ENCODE measurements at regions of chr21 and their contacts with region 1.

Region 1: GRCh38 chr21:43866260-43866629 is 1.2 kb downstream of the AGPAT3 start:
- DNase-seq: no peak
- H3K4me3 Mint-ChIP-seq: peak overlapping the region; percentile 90
- H3K27ac Mint-ChIP-seq: peak overlapping the region; percentile 94
- H3K4me1 Mint-ChIP-seq: peaks cover 42% of the 10 kb centered on the region
- H3K27me3 Mint-ChIP-seq: no peaks in the 10 kb centered on the region

Region 2: GRCh38 chr21:43619856-43620255 is 246.4 kb before region 1 on chr21:
- intact Hi-C with region 1: no loop called
- DNase-seq: no peak
- H3K4me3 Mint-ChIP-seq: no peak overlapping the region
- H3K27ac Mint-ChIP-seq: no peak overlapping the region
- H3K4me1 Mint-ChIP-seq: peaks cover 2% of the 10 kb centered on the region
- H3K27me3 Mint-ChIP-seq: peaks cover 8% of the 10 kb centered on the region

Region 3: DNA sequence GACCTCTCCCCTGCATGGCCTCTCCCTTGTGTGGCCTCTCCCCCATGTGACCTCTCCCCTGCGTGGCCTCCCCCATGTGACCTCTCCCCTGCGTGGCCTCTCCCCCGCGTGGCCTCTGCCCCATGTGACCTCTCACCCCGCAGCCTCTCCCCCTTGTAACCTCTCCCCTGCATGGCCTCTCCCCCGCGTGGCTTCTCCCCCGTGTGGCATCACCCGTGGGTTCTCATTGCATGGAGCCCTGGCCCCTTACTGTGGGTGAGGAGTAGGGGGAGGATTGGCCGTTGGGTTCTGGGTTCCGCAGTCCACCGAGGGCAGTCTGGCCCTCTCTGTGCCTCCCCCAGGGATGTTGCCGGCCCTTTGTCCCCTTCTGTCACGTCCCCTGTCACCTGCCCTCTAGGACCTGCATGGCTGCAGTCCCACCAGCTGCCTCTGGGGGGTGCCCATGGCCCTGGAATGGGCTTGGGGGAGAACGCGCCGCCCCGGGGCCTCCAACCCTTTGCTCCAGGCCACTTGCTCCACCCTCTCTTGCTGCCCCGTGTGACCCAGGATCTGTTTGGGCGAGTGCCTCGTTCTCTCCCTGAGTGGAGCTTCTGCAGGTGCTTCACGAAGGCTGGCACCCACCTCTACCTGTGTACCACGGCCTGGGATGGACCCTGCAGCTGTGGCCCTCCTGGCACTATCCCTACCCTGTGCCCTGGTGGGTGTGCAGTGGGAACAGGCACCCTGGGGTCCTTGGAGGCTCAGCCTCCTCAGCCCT is 55.6 kb before region 1 on chr21:
- intact Hi-C with region 1: loop called (anchors 5 kb)
- DNase-seq: peak; percentile 85
- H3K4me3 Mint-ChIP-seq: no peak overlapping the region
- H3K27ac Mint-ChIP-seq: peak overlapping the region; percentile 4
- H3K4me1 Mint-ChIP-seq: peaks cover 11% of the 10 kb centered on the region
- H3K27me3 Mint-ChIP-seq: no peaks in the 10 kb centered on the region

Region 4: GRCh38 chr21:43842742-43843141 is 23.5 kb before region 1 on chr21:
- intact Hi-C with region 1: loop called (anchors 2 kb)
- DNase-seq: no peak
- H3K4me3 Mint-ChIP-seq: peak overlapping the region; percentile 20
- H3K27ac Mint-ChIP-seq: peak overlapping the region; percentile 29
- H3K4me1 Mint-ChIP-seq: peaks cover 16% of the 10 kb centered on the region
- H3K27me3 Mint-ChIP-seq: no peaks in the 10 kb centered on the region

Region 5: DNA sequence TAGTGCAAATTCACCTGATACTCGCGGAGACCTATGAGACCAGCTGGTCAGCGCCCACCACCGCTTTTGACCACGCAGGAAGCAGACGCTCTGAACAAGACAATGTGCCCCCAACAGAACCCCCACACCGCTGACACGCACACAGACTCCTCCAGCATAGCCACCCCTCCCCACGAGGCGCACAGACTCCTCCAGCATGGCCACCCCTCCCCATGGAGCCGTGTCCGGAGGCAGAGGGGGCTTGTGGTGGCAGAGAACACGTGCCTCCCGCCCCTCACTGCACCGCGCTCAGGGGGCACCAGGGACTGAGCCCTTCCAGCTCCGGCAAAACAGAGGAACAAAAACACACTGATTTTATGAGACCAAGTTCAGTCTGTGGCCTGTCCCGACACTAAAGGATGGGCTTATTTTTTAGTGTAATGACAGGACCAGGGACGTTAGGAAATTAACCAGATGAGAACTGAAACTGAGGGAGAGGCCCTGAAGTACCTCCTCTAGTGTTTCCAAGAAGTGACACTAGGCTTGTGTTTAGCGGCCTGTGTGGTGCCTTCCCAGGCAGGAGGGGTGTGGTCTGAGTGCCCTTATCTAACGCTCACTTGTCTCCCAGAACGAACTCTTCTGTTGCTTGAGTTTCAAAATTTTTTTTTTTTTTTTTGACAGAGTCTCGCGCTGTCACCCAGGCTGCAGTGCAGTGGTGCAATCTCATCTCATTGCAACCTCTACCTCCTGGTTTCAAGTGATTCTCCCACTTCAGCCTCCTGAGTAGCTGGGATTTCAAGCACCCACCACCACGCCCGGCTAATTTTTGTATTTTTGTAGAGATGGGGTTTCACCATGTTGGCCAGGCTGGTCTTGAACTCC is 11.2 kb before region 1 on chr21:
- intact Hi-C with region 1: loop called (anchors 1 kb)
- DNase-seq: peak; percentile 78
- H3K4me3 Mint-ChIP-seq: peak overlapping the region; percentile 60
- H3K27ac Mint-ChIP-seq: peak overlapping the region; percentile 87
- H3K4me1 Mint-ChIP-seq: peaks cover 33% of the 10 kb centered on the region
- H3K27me3 Mint-ChIP-seq: no peaks in the 10 kb centered on the region

Region 6: DNA sequence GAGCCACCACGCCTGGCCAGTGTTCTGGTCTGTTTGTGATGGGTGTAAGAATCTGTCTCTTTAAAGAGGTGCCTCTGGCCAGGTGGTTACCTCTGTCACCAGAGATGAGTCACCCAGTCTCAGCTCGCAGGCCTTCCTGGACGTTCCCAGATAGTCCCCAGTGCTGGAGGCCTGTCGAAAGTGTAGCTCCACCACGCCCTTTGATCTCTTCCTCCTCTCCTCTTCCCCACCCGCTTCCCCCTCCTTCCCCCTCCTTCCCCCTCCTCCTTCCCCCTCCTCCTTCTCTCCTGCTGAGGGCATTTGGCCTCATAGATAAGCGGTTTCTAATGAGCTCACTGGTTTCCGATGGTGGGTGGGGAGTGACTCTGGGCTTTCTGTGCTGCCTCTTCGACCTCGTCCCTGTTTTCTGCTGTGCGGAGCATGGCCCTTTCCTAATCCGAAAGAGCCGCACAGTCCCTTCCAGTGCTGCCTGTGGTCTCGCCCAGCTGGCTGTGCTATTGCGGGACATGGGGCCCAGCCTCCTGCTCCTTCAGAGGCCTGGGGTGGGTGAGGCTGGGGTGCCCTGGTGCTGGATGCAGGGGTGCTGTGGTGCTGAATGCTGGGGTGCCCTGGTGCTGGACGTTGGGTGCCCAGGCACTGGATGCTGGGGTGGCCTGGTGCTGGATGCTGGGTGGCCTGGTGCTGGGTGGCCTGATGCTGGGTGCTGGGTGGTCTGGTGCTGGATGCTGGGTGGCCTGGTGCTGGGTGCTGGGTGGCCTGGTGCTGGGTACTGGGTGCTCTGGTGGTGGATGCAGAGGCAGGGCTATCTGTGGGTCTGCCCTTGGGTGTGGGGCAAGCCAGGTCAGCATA is 18.0 kb after region 1 on chr21:
- intact Hi-C with region 1: loop called (anchors 2 kb)
- DNase-seq: no peak
- H3K4me3 Mint-ChIP-seq: no peak overlapping the region
- H3K27ac Mint-ChIP-seq: peak overlapping the region; percentile 79
- H3K4me1 Mint-ChIP-seq: peaks cover 62% of the 10 kb centered on the region
- H3K27me3 Mint-ChIP-seq: no peaks in the 10 kb centered on the region

Region 7: DNA sequence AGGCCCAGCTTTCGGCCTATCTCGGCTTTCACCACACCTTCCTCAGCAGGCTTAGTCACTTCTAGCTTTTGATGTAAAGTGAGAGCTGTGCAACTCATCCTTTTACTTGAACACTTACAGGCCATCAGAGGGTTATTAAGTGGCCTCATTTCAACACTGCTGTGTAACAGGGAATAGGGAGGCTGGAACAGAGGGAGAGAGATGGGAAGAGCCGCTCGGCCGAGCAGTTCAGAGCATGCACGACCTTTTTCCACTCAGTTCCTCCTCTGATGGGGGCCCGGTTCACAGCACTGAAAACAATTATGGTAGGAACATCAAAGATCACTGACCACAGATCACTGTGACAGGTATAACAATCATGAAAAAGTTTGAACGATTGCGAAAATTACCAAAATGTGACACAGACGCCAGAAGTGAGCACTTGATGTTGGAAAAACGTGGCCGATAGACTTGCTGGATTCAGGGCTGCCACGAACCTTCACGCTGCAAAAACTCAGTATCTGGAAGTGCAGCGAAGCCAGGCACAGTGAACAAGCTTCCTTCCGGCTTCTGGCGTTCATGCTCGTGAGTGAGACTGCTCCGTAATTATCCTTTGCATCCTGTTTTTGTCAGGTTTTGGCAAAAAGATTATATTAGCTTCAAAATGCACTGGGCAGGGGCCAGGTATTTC is 27.4 kb after region 1 on chr21:
- intact Hi-C with region 1: loop called (anchors 2 kb)
- DNase-seq: peak; percentile 26
- H3K4me3 Mint-ChIP-seq: peak overlapping the region; percentile 56
- H3K27ac Mint-ChIP-seq: peak overlapping the region; percentile 83
- H3K4me1 Mint-ChIP-seq: peaks cover 37% of the 10 kb centered on the region
- H3K27me3 Mint-ChIP-seq: no peaks in the 10 kb centered on the region

Region 8: GRCh38 chr21:43916691-43917514 is 50.7 kb after region 1 on chr21:
- intact Hi-C with region 1: loop called (anchors 2 kb)
- DNase-seq: peak; percentile 62
- H3K4me3 Mint-ChIP-seq: peak overlapping the region; percentile 81
- H3K27ac Mint-ChIP-seq: peak overlapping the region; percentile 83
- H3K4me1 Mint-ChIP-seq: peaks cover 54% of the 10 kb centered on the region
- H3K27me3 Mint-ChIP-seq: no peaks in the 10 kb centered on the region